HEK293 (cell line): ENCODE measurements at regions of chr17 and their contacts with region 1.

Region 1: GRCh38 chr17:18217412-18218015 is 7.9 kb upstream of the LLGL1 start:
- H3K4me3 ChIP-seq: no peak overlapping the region
- H3K27ac ChIP-seq: no peak overlapping the region; the same call in 1 of the 2 replicates
- H3K4me1 ChIP-seq: no peaks in the 10 kb centered on the region
- CTCF ChIP-seq: peak; percentile 72

Region 2: DNA sequence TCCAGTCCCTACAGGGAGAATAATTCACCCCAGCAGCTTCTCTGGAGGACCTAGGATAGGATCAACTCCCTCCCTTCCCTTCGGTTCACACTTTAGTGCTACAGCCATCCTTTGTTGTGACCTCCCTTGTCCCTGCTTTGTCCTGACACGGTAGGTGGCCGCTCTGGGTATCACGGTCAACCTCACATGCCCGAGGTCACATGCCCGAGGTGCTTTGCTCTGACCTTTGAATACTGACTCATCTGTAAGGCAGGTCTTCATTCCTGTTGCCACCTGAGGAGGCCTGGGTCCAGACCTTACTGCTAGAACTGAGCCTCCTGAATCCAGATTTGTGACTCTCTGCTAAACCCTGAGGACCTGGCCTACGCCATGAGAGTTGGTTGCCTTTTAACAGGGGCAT is 14.2 kb before region 1 on chr17:
- CTCF ChIA-PET with region 1: interaction called, 22 read pairs
- POLR2A ChIA-PET with region 1: interaction called, 4 read pairs
- H3K4me3 ChIP-seq: no peak overlapping the region
- H3K27ac ChIP-seq: no peak overlapping the region
- H3K4me1 ChIP-seq: no peaks in the 10 kb centered on the region
- CTCF ChIP-seq: no peak